B cell (primary cell): ENCODE measurements at regions of chr1 and their contacts with region 1.

Region 1: GRCh38 chr1:16206547-16207317 is 5.7 kb downstream of the ARHGEF19 start:
- DNase-seq: peak; percentile 93
- ATAC-seq: peak; percentile 87
- H3K4me3 ChIP-seq: peak overlapping the region; percentile 11 to 96 (median 72)
- H3K4me3 Mint-ChIP-seq: peak overlapping the region; percentile 97
- H3K27ac ChIP-seq: peak overlapping the region; percentile 61 to 79
- H3K27ac Mint-ChIP-seq: peak overlapping the region; percentile 93
- H3K4me1 ChIP-seq: peaks cover 12 to 17% of the 10 kb centered on the region in 2 donors
- H3K4me1 Mint-ChIP-seq: peaks cover 10% of the 10 kb centered on the region
- H3K27me3 ChIP-seq: no peaks in the 10 kb centered on the region
- H3K27me3 Mint-ChIP-seq: peaks cover under 1% of the 10 kb centered on the region
- CTCF ChIP-seq: no peak

Region 2: GRCh38 chr1:15810073-15810472 is 396.7 kb before region 1 on chr1:
- CTCF ChIA-PET with region 1: no interaction called
- POLR2A ChIA-PET with region 1: interaction called, 13 read pairs
- intact Hi-C with region 1: no loop called
- DNase-seq: no peak
- ATAC-seq: no peak
- H3K4me3 ChIP-seq: no peak overlapping the region
- H3K4me3 Mint-ChIP-seq: no peak overlapping the region
- H3K27ac ChIP-seq: no peak overlapping the region
- H3K27ac Mint-ChIP-seq: no peak overlapping the region
- H3K4me1 ChIP-seq: no peaks in the 10 kb centered on the region
- H3K4me1 Mint-ChIP-seq: no peaks in the 10 kb centered on the region
- H3K27me3 ChIP-seq: no peaks in the 10 kb centered on the region
- H3K27me3 Mint-ChIP-seq: no peaks in the 10 kb centered on the region
- CTCF ChIP-seq: no peak

Region 3: DNA sequence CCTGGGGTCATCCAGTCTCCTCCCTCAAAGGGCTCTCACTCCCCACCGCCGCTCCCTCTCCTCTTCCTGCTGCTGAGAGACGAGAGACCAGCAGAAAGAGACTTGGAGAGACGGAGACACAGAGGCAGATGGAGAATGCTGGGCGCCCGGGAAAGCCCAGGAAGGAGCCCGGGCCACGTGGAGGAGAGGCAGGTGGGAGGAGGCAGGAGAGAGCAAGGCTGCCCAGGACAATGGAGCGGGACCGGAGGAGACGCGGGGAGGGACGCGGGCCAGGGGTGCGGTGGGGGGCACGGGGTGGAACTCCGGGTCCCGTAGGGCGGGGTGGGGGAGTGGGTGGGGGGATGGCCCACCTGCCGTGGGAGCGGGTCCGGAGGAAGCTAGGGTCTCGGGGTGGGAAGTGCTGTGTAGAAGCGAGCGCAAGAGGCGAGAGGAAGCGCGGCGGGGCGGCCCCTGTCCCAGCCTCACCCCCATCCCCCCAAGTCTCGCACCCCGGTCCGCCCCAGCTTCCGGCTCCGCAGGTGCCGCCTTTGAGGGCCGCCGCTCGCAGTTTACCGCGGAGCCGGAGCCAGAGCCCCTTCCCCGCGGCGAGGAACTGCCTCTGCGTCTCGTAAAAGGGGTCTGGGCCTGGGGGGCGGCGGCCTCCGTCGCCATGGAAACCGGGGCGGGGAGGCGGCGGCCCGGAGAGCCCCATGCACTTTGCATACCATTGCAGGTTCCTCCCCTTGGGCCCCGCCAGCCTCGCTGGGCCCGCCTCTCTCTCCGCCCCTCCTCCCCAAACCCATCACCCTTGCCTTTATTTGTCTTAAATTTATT is 39.2 kb before region 1 on chr1:
- CTCF ChIA-PET with region 1: no interaction called
- POLR2A ChIA-PET with region 1: no interaction called
- intact Hi-C with region 1: loop called (anchors 2 kb)
- DNase-seq: peak; percentile 89
- ATAC-seq: peak; percentile 92
- H3K4me3 ChIP-seq: peak overlapping the region in 4 of 5 experiments; percentile 60 to 67 (median 64)
- H3K4me3 Mint-ChIP-seq: peak overlapping the region; percentile 84
- H3K27ac ChIP-seq: peak overlapping the region in 1 of 2 donors; percentile 50
- H3K27ac Mint-ChIP-seq: peak overlapping the region; percentile 50
- H3K4me1 ChIP-seq: peaks cover 21 to 33% of the 10 kb centered on the region in 2 donors
- H3K4me1 Mint-ChIP-seq: peaks cover 27% of the 10 kb centered on the region
- H3K27me3 ChIP-seq: peaks cover 0 to 14% (median 4%) of the 10 kb centered on the region in 4 experiments
- H3K27me3 Mint-ChIP-seq: peaks cover 4% of the 10 kb centered on the region
- CTCF ChIP-seq: no peak

Region 4: GRCh38 chr1:16195518-16195905 is 11.2 kb before region 1 on chr1:
- CTCF ChIA-PET with region 1: no interaction called
- POLR2A ChIA-PET with region 1: no interaction called
- intact Hi-C with region 1: no loop called
- DNase-seq: no peak
- ATAC-seq: no peak
- H3K4me3 ChIP-seq: no peak overlapping the region
- H3K4me3 Mint-ChIP-seq: no peak overlapping the region
- H3K27ac ChIP-seq: no peak overlapping the region
- H3K27ac Mint-ChIP-seq: no peak overlapping the region
- H3K4me1 ChIP-seq: no peaks in the 10 kb centered on the region
- H3K4me1 Mint-ChIP-seq: no peaks in the 10 kb centered on the region
- H3K27me3 ChIP-seq: no peaks in the 10 kb centered on the region
- H3K27me3 Mint-ChIP-seq: peaks cover 4% of the 10 kb centered on the region
- CTCF ChIP-seq: no peak

Region 5: DNA sequence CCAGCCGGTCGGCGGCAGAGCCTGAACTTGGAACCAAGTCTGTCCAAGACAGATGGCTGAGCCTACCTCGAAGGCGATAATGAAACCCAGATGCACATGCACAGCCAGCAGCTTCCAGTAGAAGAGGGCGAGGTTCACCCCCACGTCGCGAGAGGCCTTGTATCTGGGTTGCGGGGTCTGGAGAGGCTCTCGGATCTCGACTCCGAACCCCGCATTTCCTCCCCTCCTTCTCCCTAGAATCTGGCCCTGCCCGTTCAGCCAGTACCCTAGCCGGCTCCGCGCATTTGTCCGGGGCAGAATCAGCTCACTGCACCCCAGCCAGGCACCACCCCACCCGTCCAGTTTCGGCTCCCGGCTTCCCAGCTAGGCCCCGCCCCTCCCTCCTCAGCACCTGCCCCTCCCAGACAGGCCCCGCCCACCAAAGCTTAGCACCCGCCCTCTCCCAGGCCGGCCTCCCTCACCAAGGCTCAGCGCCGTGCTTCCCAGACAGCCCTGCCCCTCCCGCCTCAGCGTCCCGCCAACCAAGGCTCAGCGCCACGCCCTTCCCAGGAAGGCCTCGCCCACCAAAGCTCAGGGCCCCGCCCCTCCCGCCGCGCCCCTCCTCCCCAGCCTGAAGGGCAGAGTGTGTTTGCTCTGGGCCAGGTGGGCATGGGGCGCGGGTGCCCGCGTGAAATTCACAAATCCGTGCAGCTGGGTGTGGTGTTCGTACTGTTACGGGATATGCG is 10.5 kb after region 1 on chr1:
- CTCF ChIA-PET with region 1: interaction called, 6 read pairs
- POLR2A ChIA-PET with region 1: interaction called, 11 read pairs
- intact Hi-C with region 1: loop called (anchors 1 kb)
- DNase-seq: peak; percentile 96
- ATAC-seq: peak; percentile 99
- H3K4me3 ChIP-seq: peak overlapping the region; percentile 47 to 70 (median 63)
- H3K4me3 Mint-ChIP-seq: peak overlapping the region; percentile 90
- H3K27ac ChIP-seq: peak overlapping the region in 1 of 2 donors; percentile 9
- H3K27ac Mint-ChIP-seq: peak overlapping the region; percentile 59
- H3K4me1 ChIP-seq: peaks cover 14 to 21% of the 10 kb centered on the region in 2 donors
- H3K4me1 Mint-ChIP-seq: peaks cover 19% of the 10 kb centered on the region
- H3K27me3 ChIP-seq: no peaks in the 10 kb centered on the region
- H3K27me3 Mint-ChIP-seq: no peaks in the 10 kb centered on the region
- CTCF ChIP-seq: no peak

Region 6: GRCh38 chr1:16236511-16237342 is 30.0 kb after region 1 on chr1 and contains the start of gene CPLANE2:
- CTCF ChIA-PET with region 1: interaction called, 9 read pairs
- POLR2A ChIA-PET with region 1: interaction called, 3 read pairs
- intact Hi-C with region 1: loop called (anchors 1 kb)
- DNase-seq: peak; percentile 97
- ATAC-seq: peak; percentile 79
- H3K4me3 ChIP-seq: peak within 1 kb of the TSS; percentile 55 to 98 (median 76)
- H3K4me3 Mint-ChIP-seq: peak within 1 kb of the TSS; percentile 85
- H3K27ac ChIP-seq: peak within 1 kb of the TSS; percentile 82 to 92
- H3K27ac Mint-ChIP-seq: peak within 1 kb of the TSS; percentile 96
- H3K4me1 ChIP-seq: peaks cover 12 to 17% of the 10 kb centered on the region in 2 donors
- H3K4me1 Mint-ChIP-seq: peaks cover 16% of the 10 kb centered on the region
- H3K27me3 ChIP-seq: no peaks in the 10 kb centered on the region
- H3K27me3 Mint-ChIP-seq: no peaks in the 10 kb centered on the region
- CTCF ChIP-seq: no peak
- total RNA-seq, gene CPLANE2: 11.1 and 14.3 TPM in 2 replicates

Region 7: GRCh38 chr1:16243936-16244649 is 37.4 kb after region 1 on chr1:
- CTCF ChIA-PET with region 1: interaction called, 13 read pairs
- POLR2A ChIA-PET with region 1: no interaction called
- intact Hi-C with region 1: loop called (anchors 2 kb)
- DNase-seq: peak; percentile 79
- ATAC-seq: peak; percentile 93
- H3K4me3 ChIP-seq: no peak overlapping the region
- H3K4me3 Mint-ChIP-seq: no peak overlapping the region
- H3K27ac ChIP-seq: no peak overlapping the region
- H3K27ac Mint-ChIP-seq: no peak overlapping the region
- H3K4me1 ChIP-seq: peaks cover 6 to 7% of the 10 kb centered on the region in 2 donors
- H3K4me1 Mint-ChIP-seq: peaks cover 12% of the 10 kb centered on the region
- H3K27me3 ChIP-seq: no peaks in the 10 kb centered on the region
- H3K27me3 Mint-ChIP-seq: no peaks in the 10 kb centered on the region
- CTCF ChIP-seq: peak; percentile 81